ENCODE measurements at regions of chr12 and their contacts with region 1.

Region 1: GRCh38 chr12:6278439-6279255 is 31.8 kb upstream of the PLEKHG6 start:
- DNase-seq: peak; percentile 83
- H3K4me3 ChIP-seq: peak overlapping the region in 2 of 3 experiments; percentile 29 to 39
- H3K27ac ChIP-seq: peak overlapping the region; percentile 68
- H3K4me1 ChIP-seq: peaks cover 40% of the 10 kb centered on the region
- H3K27me3 ChIP-seq: no peaks in the 10 kb centered on the region
- CTCF ChIP-seq: peak; percentile 50 to 95
- POLR2A ChIP-seq: peak; percentile 57

Region 2: GRCh38 chr12:6092784-6093722 is 185.6 kb before region 1 on chr12:
- CTCF ChIA-PET with region 1: interaction called, 10 read pairs
- POLR2A ChIA-PET with region 1: no interaction called
- dilution Hi-C with region 1: no loop called
- intact Hi-C with region 1: no loop called
- DNase-seq: peak; percentile 92
- H3K4me3 ChIP-seq: no peak overlapping the region
- H3K27ac ChIP-seq: peak overlapping the region; percentile 60
- H3K4me1 ChIP-seq: peaks cover 87% of the 10 kb centered on the region
- H3K27me3 ChIP-seq: no peaks in the 10 kb centered on the region
- CTCF ChIP-seq: peak in 1 of 2 donors; percentile 14
- POLR2A ChIP-seq: no peak

Region 3: GRCh38 chr12:6205144-6205539 is 73.5 kb before region 1 on chr12:
- CTCF ChIA-PET with region 1: interaction called, 31 read pairs
- POLR2A ChIA-PET with region 1: interaction called, 5 read pairs
- dilution Hi-C with region 1: no loop called
- intact Hi-C with region 1: no loop called
- DNase-seq: peak; percentile 69
- H3K4me3 ChIP-seq: no peak overlapping the region
- H3K27ac ChIP-seq: peak overlapping the region; percentile 85
- H3K4me1 ChIP-seq: peaks cover 48% of the 10 kb centered on the region
- H3K27me3 ChIP-seq: no peaks in the 10 kb centered on the region
- CTCF ChIP-seq: no peak
- POLR2A ChIP-seq: peak; percentile 39

Region 4: DNA sequence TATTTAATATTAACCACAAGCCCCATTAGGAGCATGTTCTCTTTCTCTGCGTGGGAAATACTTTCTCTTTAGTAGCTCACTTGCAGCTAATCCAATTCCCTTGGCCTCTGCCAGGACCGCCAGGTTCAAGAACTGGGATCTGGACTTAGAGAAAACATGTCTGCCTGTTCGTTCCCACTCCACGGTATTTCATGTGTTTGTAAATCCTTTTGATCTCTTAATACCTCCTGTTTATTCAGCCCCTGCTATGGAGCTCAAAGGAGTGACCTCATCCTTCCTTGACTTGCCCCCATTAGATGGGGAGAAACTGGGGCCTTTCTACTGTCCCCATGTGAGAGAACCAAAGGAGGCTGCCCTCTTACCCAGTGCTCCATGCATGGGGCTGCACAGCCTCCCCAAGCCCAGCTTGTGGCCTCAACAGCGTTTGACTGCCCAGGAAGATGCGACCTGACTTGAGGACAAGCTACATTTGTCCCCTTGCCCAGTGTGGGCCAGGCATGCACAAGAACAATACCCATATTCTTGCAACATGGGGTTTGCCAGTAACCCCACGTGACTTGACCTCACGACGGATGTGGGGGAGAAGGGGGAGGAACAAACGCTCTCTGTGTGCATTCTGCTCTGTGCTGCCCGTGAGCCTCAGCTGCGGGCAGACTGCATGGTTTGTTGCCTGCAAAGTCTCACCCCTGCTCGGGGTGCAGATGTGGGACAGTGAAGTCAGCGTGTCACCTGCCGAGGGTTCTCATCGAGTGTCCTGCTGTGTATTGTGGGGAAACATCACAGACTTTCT is 48.1 kb before region 1 on chr12:
- CTCF ChIA-PET with region 1: interaction called, 11 read pairs
- POLR2A ChIA-PET with region 1: no interaction called
- dilution Hi-C with region 1: no loop called
- intact Hi-C with region 1: loop called (anchors 5 kb)
- DNase-seq: no peak
- H3K4me3 ChIP-seq: no peak overlapping the region
- H3K27ac ChIP-seq: peak overlapping the region; percentile 42
- H3K4me1 ChIP-seq: peaks cover 74% of the 10 kb centered on the region
- H3K27me3 ChIP-seq: no peaks in the 10 kb centered on the region
- CTCF ChIP-seq: no peak
- POLR2A ChIP-seq: peak; percentile 2